Activated CD4-positive, alpha-beta memory T cell treated with anti-CD3 and anti-CD28 coated beads for 36 hours (primary cell): ENCODE measurements at regions of chr3 and their contacts with region 1.

Region 1: GRCh38 chr3:110814170-110815007 is 257.2 kb upstream of the NECTIN3 start:
- DNase-seq: peak; percentile 81
- H3K4me3 Mint-ChIP-seq: peak overlapping the region; percentile 12
- H3K27ac Mint-ChIP-seq: peak overlapping the region; percentile 78
- H3K4me1 Mint-ChIP-seq: peaks cover 19% of the 10 kb centered on the region
- H3K27me3 Mint-ChIP-seq: peaks cover 15% of the 10 kb centered on the region

Region 2: DNA sequence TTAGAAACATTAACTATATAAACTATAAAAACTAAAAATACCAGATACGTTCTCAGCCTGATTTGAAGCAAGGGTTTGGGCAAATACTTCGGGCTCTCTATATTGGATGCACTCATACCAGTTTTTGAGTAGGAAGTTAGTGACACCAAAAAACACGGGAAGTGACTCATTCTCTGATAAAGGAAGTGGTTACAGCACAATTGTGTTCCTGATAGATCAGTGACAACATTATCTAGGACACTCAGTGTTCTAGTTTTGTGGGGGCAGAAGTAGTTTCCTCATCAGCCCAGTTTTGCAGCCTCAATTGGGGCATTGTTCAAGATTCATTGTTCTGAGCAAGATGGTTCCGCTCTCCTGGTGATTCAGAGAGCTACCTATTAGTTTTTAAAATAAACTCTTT is 1007.5 kb before region 1 on chr3:
- CTCF ChIA-PET with region 1: no interaction called
- POLR2A ChIA-PET with region 1: no interaction called
- intact Hi-C with region 1: loop called (anchors 10 kb)
- DNase-seq: peak; percentile 44
- H3K4me3 Mint-ChIP-seq: no peak overlapping the region
- H3K27ac Mint-ChIP-seq: peak overlapping the region; percentile 62
- H3K4me1 Mint-ChIP-seq: peaks cover 34% of the 10 kb centered on the region
- H3K27me3 Mint-ChIP-seq: no peaks in the 10 kb centered on the region

Region 3: DNA sequence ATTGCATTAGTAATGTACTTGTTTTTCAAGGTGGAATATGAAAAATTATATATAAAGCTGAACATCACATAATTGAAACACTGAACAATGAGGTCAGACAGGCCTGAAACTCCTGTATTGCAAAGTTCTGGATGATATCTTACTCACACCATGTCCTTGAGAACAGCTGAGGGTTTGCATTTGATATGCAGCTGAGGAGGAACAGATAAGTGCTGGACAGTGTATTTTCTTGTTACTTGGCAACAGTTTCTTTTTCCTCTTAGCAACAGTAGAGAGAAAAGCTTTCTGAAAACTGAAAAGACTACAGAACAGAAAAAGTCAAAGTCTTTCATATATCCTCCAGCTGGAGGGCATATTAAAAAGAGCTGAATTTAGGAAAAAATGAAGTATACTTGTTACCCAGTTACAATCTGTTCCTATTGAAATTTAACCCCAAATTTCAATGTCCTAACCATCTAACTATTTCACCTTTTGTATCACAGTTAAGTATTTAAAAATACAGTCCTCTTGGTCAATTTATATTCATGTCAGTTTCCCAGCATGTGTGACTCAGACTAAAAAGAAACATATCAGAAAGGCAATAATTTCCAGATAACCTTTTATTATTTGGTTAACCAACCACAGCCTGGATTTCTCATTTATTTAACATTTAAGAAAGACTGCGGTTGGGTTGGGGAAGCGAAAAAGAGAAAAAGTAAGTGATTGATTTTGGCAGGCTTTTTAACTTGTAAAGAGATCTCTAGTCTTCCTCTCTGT is 744.0 kb before region 1 on chr3:
- CTCF ChIA-PET with region 1: no interaction called
- POLR2A ChIA-PET with region 1: no interaction called
- intact Hi-C with region 1: loop called (anchors 10 kb)
- DNase-seq: no peak
- H3K4me3 Mint-ChIP-seq: no peak overlapping the region
- H3K27ac Mint-ChIP-seq: peak overlapping the region; percentile 6
- H3K4me1 Mint-ChIP-seq: peaks cover 16% of the 10 kb centered on the region
- H3K27me3 Mint-ChIP-seq: no peaks in the 10 kb centered on the region

Region 4: DNA sequence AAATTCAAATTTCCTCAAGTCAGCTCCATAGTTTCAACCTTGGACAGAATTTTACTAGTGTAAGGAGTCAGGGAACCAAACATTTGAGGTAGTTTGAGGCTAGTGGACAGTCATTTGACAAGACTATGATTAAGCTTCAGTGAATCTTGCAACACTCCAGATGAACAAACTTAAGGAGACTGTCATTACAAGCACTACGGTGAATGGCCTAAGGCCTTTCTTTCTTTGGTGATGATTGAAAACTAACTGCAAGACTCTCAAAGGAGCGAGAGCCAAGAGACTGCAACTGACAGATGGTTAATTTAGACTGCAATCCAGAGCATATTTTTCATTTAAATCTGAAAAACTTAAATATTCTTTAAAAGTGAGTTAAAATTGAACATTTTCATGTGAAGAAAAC is 15.1 kb before region 1 on chr3:
- CTCF ChIA-PET with region 1: no interaction called
- POLR2A ChIA-PET with region 1: no interaction called
- intact Hi-C with region 1: no loop called
- DNase-seq: no peak
- H3K4me3 Mint-ChIP-seq: no peak overlapping the region
- H3K27ac Mint-ChIP-seq: no peak overlapping the region
- H3K4me1 Mint-ChIP-seq: no peaks in the 10 kb centered on the region
- H3K27me3 Mint-ChIP-seq: no peaks in the 10 kb centered on the region

Region 5: GRCh38 chr3:110932567-110932966 is 118.2 kb after region 1 on chr3:
- CTCF ChIA-PET with region 1: no interaction called
- POLR2A ChIA-PET with region 1: no interaction called
- intact Hi-C with region 1: no loop called
- DNase-seq: no peak
- H3K4me3 Mint-ChIP-seq: no peak overlapping the region
- H3K27ac Mint-ChIP-seq: no peak overlapping the region
- H3K4me1 Mint-ChIP-seq: no peaks in the 10 kb centered on the region
- H3K27me3 Mint-ChIP-seq: peaks cover 1% of the 10 kb centered on the region

Region 6: GRCh38 chr3:111238885-111239284 is 424.5 kb after region 1 on chr3:
- CTCF ChIA-PET with region 1: no interaction called
- POLR2A ChIA-PET with region 1: interaction called, 3 read pairs
- intact Hi-C with region 1: loop called (anchors 1 kb)
- DNase-seq: no peak
- H3K4me3 Mint-ChIP-seq: no peak overlapping the region
- H3K27ac Mint-ChIP-seq: no peak overlapping the region
- H3K4me1 Mint-ChIP-seq: peaks cover 22% of the 10 kb centered on the region
- H3K27me3 Mint-ChIP-seq: no peaks in the 10 kb centered on the region

Region 7: DNA sequence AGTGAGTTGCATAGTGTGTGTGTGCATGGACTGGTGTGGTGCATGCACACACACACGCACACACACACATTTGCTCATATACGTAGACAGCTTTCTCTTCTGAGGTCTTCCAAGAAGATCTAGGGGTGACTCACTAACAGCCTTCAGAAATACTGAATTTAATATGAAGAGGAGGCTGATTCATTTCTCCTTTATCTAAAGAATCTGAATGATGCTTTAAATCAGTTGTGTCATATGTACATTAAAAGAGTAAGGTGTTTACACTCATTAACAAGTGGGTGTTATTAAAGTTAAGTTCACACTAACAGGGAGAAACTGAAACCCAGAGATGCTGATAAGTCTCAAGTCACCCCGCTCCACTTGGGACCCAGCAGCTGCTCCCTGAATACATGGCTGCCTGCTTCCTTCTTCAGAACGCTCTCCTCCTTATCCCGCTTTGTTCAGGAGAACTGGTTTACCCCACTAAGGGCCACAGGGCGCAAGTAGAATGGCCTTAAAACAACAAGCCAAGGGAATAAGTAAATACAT is 1242.1 kb after region 1 on chr3:
- CTCF ChIA-PET with region 1: no interaction called
- POLR2A ChIA-PET with region 1: no interaction called
- intact Hi-C with region 1: loop called (anchors 10 kb)
- DNase-seq: peak; percentile 53
- H3K4me3 Mint-ChIP-seq: peak overlapping the region; percentile 1
- H3K27ac Mint-ChIP-seq: peak overlapping the region; percentile 25
- H3K4me1 Mint-ChIP-seq: peaks cover 25% of the 10 kb centered on the region
- H3K27me3 Mint-ChIP-seq: peaks cover 11% of the 10 kb centered on the region